ENCODE measurements at regions of chr13 and their contacts with region 1.

Region 1: DNA sequence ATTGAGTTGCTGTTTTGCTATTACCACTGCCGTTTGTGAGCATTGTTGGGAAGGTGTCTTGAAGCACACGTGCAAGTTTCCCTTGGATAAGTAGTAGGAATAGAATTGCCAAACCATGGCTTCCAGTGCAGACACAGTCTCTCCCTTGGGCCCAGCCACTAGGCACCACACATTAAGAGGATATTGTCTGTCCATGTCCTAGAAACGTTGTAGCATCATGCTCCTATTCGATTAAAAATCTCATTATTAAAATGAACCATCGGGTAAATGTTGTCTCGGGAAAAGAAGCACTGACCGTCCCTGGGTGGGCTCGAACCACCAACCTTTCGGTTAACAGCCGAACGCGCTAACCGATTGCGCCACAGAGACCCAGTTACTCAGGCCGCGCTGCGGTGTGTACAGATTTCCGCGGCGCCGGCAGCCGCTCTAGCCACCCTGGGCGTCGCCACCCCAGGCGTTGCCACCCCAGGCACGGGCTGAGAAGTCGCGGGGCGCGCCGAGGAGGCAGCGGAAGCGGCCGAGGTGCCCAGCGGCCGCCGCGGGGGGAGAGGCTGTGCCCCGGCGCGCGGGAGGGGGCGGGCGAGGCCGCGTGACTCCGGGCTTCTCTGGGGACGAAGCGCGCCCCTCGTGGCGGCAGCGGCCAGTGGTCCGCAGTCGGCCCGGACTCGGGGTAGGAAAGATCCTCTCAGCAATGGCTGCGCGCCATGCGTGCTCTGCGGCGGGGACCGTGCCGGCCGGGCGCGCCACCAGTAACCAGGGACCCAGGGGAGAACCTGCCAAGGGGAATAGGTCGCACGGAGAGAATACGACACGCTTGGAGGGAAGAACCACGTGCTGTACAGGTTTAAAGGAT is 56.2 kb downstream of the USPL1 start:
- DNase-seq: peak; percentile 95

Region 2: DNA sequence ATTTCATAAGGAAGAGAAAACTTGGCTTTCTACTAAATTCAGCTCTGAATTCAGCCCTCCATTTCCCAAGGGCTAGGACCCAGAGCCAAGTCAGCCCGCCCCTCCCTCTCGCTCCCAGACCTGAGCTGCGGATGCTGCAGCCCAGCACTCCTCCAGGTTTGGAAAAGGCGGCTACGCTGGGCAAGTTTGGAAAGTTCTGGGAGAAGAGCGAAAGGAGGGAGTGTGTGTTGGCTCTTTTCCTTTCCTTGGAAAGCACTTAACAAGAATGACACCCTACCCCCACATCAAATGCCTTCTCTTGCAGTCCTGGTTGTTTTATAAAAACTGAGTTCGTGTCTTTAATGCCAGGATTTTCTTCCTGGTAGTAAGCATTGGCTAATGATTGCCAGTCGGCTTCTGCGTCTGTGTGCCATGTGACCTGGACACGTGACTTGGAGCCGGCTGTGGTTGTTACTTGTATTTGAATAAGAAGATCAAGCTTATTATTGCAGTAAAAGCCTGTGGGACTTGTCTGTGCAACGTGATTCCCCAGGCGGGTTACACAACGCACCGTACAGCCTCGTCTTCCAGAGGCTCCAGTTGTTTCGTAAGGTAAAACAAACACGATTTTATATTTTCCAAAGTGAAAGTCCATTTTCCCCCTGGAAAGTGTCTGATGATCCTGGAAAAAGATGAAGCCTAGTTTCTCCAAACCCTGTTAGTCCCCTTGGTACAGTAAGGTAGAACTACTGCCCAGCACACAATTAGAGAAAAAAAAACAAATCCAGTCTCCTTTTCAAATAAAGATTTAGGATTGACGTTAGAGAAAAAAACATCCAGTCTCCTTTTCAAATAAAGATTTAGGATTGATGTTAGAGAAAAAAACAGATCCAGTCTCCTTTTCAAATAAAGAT is 278.5 kb before region 1 on chr13:
- intact Hi-C with region 1: loop called (anchors 10 kb)
- DNase-seq: peak; percentile 92

Region 3: GRCh38 chr13:30607908-30608307 is 66.0 kb before region 1 on chr13:
- intact Hi-C with region 1: no loop called
- DNase-seq: no peak

Region 4: GRCh38 chr13:31044377-31045285 is 370.7 kb after region 1 on chr13:
- intact Hi-C with region 1: loop called (anchors 10 kb)
- DNase-seq: peak; percentile 88

Measured in cardiac septum (tissue), 1 donor.